ENCODE measurements at regions of chr14 and their contacts with region 1.

Region 1: DNA sequence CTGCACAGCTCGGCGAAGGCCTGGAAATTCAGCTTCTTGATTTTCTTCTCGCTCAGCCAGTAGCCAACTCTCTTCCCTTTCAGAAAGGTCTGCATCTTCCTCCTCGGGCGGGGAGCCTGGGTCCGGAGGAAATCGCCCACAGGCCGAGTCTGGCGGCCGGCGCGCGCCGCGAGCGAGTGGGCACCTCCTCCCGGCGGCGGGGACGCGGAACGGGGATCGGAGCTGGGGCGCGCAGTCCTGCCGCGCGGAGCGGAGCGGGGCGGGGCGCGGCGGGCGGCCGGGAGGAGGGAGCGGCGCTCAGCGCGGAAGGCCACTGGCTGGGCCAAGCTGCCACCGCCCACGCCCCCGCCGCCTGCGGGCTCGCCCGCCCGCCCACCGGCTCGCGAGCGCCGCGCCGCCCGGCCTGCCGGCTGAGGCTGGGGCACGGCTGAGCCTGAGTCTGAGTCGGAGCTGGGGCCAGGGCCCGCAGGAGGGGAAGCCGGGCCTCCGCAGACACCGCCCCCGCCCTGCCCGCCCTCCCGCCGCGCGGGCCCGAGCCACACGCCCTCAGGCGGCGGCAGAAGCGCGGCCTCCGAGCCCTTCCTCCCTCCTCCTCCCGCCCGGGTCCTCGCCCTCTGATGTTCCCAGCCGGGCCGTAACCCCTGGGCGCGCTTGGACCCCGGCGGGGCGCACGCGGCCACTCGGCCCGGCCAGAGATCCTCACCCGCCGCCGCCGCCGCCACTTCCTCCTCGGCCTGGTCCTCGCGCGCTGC is 480 bp downstream of the ITPK1 start:
- DNase-seq: peak; percentile 96

Region 2: GRCh38 chr14:92973261-92973797 is 141.9 kb before region 1 on chr14:
- intact Hi-C with region 1: loop called (anchors 5 kb)
- DNase-seq: peak; percentile 85

Region 3: DNA sequence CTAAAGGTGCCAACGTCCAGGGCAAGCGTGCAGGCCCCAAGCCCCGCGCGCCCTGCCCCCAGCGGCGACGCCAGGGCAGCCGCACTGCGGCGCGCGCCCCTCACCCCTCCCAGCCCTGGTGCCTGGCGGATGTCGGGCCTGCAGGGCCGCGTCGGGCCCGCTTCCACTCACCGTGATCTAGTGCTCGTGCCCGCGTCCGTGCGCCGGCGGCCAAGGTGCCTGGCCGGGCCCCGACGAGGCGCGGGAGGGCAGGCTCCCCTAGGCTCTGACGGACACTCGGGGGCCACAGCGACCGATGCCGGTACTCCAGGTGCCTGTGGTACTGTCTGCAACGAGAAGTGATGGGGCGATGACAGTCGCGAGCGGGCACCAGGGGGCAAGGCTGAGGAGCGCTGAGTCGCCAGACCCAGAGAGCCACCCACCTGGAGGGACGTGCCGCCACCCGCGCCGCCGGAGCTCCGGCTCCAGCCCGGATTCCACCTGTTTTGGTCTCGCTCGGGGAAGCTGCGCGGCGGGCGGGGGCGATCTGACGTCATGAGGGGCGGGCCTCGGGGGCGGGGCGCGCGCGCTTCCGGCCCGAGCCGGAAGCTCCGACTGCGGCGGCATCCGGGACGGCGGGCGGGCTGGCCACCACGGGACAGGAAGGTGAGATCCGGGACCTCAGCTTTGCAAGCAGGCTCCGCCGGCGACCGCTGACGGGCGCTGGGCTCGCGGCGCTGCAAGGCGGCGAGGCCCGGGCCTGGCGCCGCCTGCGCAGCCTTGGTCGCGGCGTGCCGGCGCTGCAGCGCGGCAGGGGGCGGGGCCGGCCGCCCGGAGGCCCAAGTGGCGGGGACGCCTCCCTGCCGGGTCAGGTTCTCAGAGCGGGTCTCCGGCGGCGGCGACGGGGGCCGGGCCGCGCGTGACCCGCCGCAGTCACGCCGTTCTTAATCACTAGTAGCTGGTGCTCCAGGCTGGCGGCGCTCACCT is 69.4 kb after region 1 on chr14 and contains the starts of genes LYSET and MOAP1:
- intact Hi-C with region 1: loop called (anchors 2 kb)
- DNase-seq: peak; percentile 95
- total RNA-seq, gene LYSET: 17.3 TPM
- total RNA-seq, gene MOAP1: 58.1 TPM